Activated B cell treated with CpG ODN at 0.5 μM for 24 hours (primary cell): ENCODE measurements at regions of chr19 and their contacts with region 1.

Region 1: GRCh38 chr19:20237761-20238623 is 71.0 kb downstream of the ZNF486 start:
- DNase-seq: peak; percentile 79
- ATAC-seq: peak; percentile 94
- H3K4me3 Mint-ChIP-seq: peak overlapping the region; percentile 100
- H3K27ac Mint-ChIP-seq: peak overlapping the region; percentile 93
- H3K4me1 Mint-ChIP-seq: peaks cover 23% of the 10 kb centered on the region
- H3K27me3 Mint-ChIP-seq: no peaks in the 10 kb centered on the region
- CTCF ChIP-seq: no peak

Region 2: GRCh38 chr19:19618219-19619051 is 619.6 kb before region 1 on chr19 and contains the start of gene PBX4:
- CTCF ChIA-PET with region 1: no interaction called
- POLR2A ChIA-PET with region 1: interaction called, 10 read pairs
- intact Hi-C with region 1: no loop called
- DNase-seq: peak; percentile 98
- ATAC-seq: peak; percentile 95
- H3K4me3 Mint-ChIP-seq: peak within 1 kb of the TSS; percentile 85
- H3K27ac Mint-ChIP-seq: peak within 1 kb of the TSS; percentile 83
- H3K4me1 Mint-ChIP-seq: peaks cover 35% of the 10 kb centered on the region
- H3K27me3 Mint-ChIP-seq: no peaks in the 10 kb centered on the region
- CTCF ChIP-seq: no peak
- total RNA-seq, gene PBX4: 19.4 and 21.8 TPM in 2 replicates

Region 3: GRCh38 chr19:20039203-20039723 is 198.7 kb before region 1 on chr19 and contains the start of gene ZNF682:
- CTCF ChIA-PET with region 1: interaction called, 3 read pairs
- POLR2A ChIA-PET with region 1: interaction called, 4 read pairs
- intact Hi-C with region 1: loop called (anchors 1 kb)
- DNase-seq: peak; percentile 85
- ATAC-seq: peak; percentile 100
- H3K4me3 Mint-ChIP-seq: peak within 1 kb of the TSS; percentile 98
- H3K27ac Mint-ChIP-seq: peak within 1 kb of the TSS; percentile 92
- H3K4me1 Mint-ChIP-seq: peaks cover 14% of the 10 kb centered on the region
- H3K27me3 Mint-ChIP-seq: no peaks in the 10 kb centered on the region
- CTCF ChIP-seq: no peak
- total RNA-seq, gene ZNF682: 15.5 and 19.9 TPM in 2 replicates

Region 4: GRCh38 chr19:20077791-20078463 is 160.1 kb before region 1 on chr19 and contains the start of gene ZNF90:
- CTCF ChIA-PET with region 1: interaction called, 4 read pairs
- POLR2A ChIA-PET with region 1: no interaction called
- intact Hi-C with region 1: loop called (anchors 5 kb)
- DNase-seq: peak; percentile 73
- ATAC-seq: peak; percentile 99
- H3K4me3 Mint-ChIP-seq: peak within 1 kb of the TSS; percentile 96
- H3K27ac Mint-ChIP-seq: peak within 1 kb of the TSS; percentile 69
- H3K4me1 Mint-ChIP-seq: peaks cover 18% of the 10 kb centered on the region
- H3K27me3 Mint-ChIP-seq: no peaks in the 10 kb centered on the region
- CTCF ChIP-seq: no peak
- total RNA-seq, gene ZNF90: 9.8 and 12.5 TPM in 2 replicates

Region 5: DNA sequence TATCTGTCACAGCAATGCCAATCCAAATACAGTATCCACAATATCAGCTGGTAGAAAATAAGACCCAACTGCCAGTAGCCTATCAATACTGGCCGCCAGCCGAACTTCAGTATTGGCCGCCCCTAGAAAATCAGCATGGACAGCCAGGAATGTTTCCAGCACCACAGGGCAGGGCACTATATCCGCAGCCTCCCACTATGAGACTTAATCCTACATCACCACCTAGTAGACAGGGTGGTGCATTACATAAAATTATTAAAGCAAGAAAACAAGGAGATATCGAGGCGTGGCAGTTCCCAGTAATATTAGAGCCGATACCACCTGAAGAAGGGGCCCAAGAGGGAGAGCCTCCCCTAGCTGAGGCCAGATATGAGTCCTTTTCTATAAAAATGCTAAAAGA is 40.4 kb after region 1 on chr19:
- CTCF ChIA-PET with region 1: no interaction called
- POLR2A ChIA-PET with region 1: no interaction called
- intact Hi-C with region 1: loop called (anchors 5 kb)
- DNase-seq: no peak
- ATAC-seq: no peak
- H3K4me3 Mint-ChIP-seq: no peak overlapping the region
- H3K27ac Mint-ChIP-seq: no peak overlapping the region
- H3K4me1 Mint-ChIP-seq: peaks cover 29% of the 10 kb centered on the region
- H3K27me3 Mint-ChIP-seq: no peaks in the 10 kb centered on the region
- CTCF ChIP-seq: no peak

Region 6: GRCh38 chr19:20294181-20294580 is 56.2 kb after region 1 on chr19:
- CTCF ChIA-PET with region 1: no interaction called
- POLR2A ChIA-PET with region 1: no interaction called
- intact Hi-C with region 1: no loop called
- DNase-seq: no peak
- ATAC-seq: no peak
- H3K4me3 Mint-ChIP-seq: no peak overlapping the region
- H3K27ac Mint-ChIP-seq: no peak overlapping the region
- H3K4me1 Mint-ChIP-seq: no peaks in the 10 kb centered on the region
- H3K27me3 Mint-ChIP-seq: no peaks in the 10 kb centered on the region
- CTCF ChIP-seq: no peak

Region 7: GRCh38 chr19:22052644-22053013 is 1814.6 kb after region 1 on chr19:
- CTCF ChIA-PET with region 1: no interaction called
- POLR2A ChIA-PET with region 1: no interaction called
- intact Hi-C with region 1: loop called (anchors 5 kb)
- DNase-seq: no peak
- ATAC-seq: peak; percentile 43
- H3K4me3 Mint-ChIP-seq: peak overlapping the region; percentile 99
- H3K27ac Mint-ChIP-seq: peak overlapping the region; percentile 81
- H3K4me1 Mint-ChIP-seq: peaks cover 8% of the 10 kb centered on the region
- H3K27me3 Mint-ChIP-seq: no peaks in the 10 kb centered on the region
- CTCF ChIP-seq: no peak